ENCODE measurements at regions of chr12 and their contacts with region 1.

Region 1: GRCh38 chr12:69655377-69656336 is 43.4 kb downstream of the BEST3 start:
- DNase-seq: peak; percentile 90
- ATAC-seq: peak; percentile 84
- H3K4me3 ChIP-seq: no peak overlapping the region
- H3K27ac ChIP-seq: peak overlapping the region; percentile 96
- H3K4me1 ChIP-seq: peaks cover 18% of the 10 kb centered on the region
- H3K27me3 ChIP-seq: no peaks in the 10 kb centered on the region
- CTCF ChIP-seq: no peak
- POLR2A ChIP-seq: no peak
- RAD21 ChIP-seq: no peak

Region 2: DNA sequence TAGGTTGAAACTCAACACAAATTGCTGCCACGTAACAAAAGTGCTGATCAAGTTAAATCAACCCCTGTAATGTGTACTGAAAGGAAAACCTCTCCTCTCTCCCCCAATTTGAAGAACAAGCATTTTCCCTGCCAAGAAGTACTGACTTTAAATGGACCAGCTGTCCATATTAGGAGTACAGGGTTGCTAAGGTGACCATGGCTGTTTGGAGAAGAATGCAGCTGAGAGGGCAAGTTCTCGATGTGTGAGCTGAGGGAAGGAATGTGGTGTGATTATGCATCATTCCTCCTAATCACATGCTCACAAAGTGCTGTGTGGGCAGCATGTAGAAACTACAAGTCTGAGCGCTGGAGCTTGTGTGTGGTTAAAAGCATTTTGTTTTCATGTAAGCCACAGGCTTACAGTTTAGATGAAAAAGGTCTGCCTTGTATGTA is 121.3 kb before region 1 on chr12:
- CTCF ChIA-PET with region 1: no interaction called
- POLR2A ChIA-PET with region 1: no interaction called
- dilution Hi-C with region 1: no loop called
- in situ Hi-C with region 1: no loop called
- intact Hi-C with region 1: no loop called
- DNase-seq: peak; percentile 100
- ATAC-seq: peak; percentile 99
- H3K4me3 ChIP-seq: no peak overlapping the region
- H3K27ac ChIP-seq: peak overlapping the region; percentile 12; the same call in 1 of the 2 replicates
- H3K4me1 ChIP-seq: no peaks in the 10 kb centered on the region; the same call in 1 of the 2 replicates
- H3K27me3 ChIP-seq: no peaks in the 10 kb centered on the region
- CTCF ChIP-seq: no peak
- POLR2A ChIP-seq: peak; percentile 70
- RAD21 ChIP-seq: no peak; the same call in 1 of the 2 replicates

Region 3: GRCh38 chr12:69639400-69640016 is 16.1 kb before region 1 on chr12:
- CTCF ChIA-PET with region 1: interaction called, 16 read pairs
- POLR2A ChIA-PET with region 1: no interaction called
- dilution Hi-C with region 1: no loop called
- in situ Hi-C with region 1: no loop called
- intact Hi-C with region 1: no loop called
- DNase-seq: peak; percentile 67
- ATAC-seq: peak; percentile 99
- H3K4me3 ChIP-seq: no peak overlapping the region
- H3K27ac ChIP-seq: no peak overlapping the region
- H3K4me1 ChIP-seq: no peaks in the 10 kb centered on the region
- H3K27me3 ChIP-seq: peaks cover 3% of the 10 kb centered on the region; the same call in 1 of the 2 replicates
- CTCF ChIP-seq: peak; percentile 86
- POLR2A ChIP-seq: no peak
- RAD21 ChIP-seq: peak; percentile 74

Region 4: DNA sequence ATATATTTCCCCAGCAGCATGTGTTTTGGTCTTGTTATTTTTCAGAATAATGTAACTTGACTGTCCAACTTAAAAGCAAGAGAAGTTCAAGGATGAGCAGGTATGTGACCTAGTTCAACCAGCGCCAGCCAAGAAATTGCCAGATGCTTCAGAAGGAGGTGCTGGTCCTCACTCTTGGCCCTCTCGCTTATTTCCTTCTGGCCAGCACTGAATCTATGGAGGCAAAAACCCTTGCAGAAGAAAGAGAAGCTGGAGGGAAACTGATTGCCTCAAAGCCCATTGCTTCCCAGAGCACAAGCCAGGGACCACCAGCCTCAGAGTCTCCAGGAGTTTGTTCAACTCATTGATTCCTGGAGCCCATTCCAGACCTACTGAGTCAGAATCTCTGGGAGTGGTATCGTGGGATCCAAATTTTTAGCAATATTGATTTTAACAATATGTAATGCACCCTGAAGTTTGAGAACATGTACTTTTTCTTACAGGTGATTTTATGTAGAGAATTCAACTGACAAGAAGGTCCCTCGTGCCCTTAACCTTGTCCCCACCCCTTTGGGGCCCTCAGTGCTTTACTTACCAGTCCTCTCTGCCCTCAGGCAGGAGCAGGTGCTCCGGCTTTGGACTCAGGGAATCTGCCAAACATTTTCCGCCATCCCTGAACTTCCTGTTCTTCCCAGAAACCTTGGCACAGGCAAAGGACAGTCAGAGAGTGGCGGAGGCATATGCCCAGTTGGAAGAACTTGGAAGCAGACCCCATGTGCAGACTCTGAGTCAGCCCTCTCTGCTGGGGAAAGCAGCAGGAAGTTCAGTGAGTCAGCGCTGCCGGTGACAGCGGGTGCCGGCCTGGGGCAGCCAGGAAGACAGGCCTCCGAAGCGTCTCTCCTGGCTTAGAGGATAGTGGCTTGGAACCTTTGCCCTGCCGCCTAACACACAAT is 33.1 kb after region 1 on chr12:
- CTCF ChIA-PET with region 1: interaction called, 3 read pairs
- POLR2A ChIA-PET with region 1: no interaction called
- dilution Hi-C with region 1: no loop called
- in situ Hi-C with region 1: no loop called
- intact Hi-C with region 1: loop called (anchors 2 kb)
- DNase-seq: peak; percentile 94
- ATAC-seq: peak; percentile 98
- H3K4me3 ChIP-seq: no peak overlapping the region
- H3K27ac ChIP-seq: peak overlapping the region; percentile 8; the same call in 1 of the 2 replicates
- H3K4me1 ChIP-seq: peaks cover 8% of the 10 kb centered on the region
- H3K27me3 ChIP-seq: no peaks in the 10 kb centered on the region; the same call in 1 of the 2 replicates
- CTCF ChIP-seq: no peak
- POLR2A ChIP-seq: no peak
- RAD21 ChIP-seq: 0 out of 2 replicates have a peak, but pooled peaks have one; percentile 6

Region 5: DNA sequence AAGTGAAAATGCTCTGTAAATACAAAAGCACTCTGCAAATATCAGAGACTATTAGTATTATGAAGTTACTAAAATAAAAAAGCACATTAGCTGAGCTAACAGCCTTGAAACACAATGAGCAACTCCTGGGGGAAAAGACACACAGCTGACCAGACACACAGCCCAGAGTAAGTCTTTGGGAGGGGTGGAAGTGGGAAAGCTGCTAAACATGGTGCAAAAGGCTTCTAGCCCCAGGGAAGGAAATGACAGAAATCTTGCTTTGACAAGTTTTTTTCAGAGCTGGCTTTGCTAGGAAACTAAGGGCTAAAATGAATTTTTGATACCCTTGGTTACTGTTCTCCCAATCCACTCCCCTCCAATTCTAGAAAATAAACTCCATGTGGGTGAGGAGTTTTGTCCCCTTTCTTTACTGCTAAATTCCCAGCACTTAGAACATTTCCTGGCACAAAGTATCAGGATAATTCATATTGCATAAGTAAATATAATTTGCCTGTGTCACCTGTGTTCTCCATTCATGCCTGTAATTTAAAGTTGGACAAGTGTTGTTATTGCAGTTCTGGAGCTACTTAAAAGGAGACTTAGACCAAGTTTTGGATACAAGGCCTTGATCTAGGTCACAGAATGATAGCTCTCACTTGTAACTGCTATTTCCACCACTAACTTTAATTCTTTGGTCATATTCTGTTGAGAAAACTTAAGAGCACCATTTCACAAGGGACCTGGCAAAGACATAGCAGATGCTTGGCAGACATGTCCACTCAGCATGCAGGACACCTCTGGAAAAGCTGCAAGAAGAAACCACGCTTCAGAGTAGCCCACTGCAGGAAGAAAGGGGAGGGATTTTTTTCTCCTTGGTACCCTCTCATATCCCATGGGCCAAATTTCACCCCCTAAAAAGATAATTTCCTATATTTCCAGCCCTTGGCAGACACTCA is 64.0 kb after region 1 on chr12:
- CTCF ChIA-PET with region 1: no interaction called
- POLR2A ChIA-PET with region 1: no interaction called
- dilution Hi-C with region 1: no loop called
- in situ Hi-C with region 1: loop called (anchors 10 kb)
- intact Hi-C with region 1: no loop called
- DNase-seq: no peak
- ATAC-seq: no peak
- H3K4me3 ChIP-seq: no peak overlapping the region
- H3K27ac ChIP-seq: no peak overlapping the region
- H3K4me1 ChIP-seq: no peaks in the 10 kb centered on the region
- H3K27me3 ChIP-seq: peaks cover 11% of the 10 kb centered on the region
- CTCF ChIP-seq: no peak
- POLR2A ChIP-seq: no peak
- RAD21 ChIP-seq: no peak